ENCODE measurements at regions of chr15 and their contacts with region 1.

Region 1: GRCh38 chr15:67521029-67521811 is at the start of gene C15orf61:
- DNase-seq: peak; percentile 90
- ATAC-seq: peak; percentile 79
- H3K4me3 Mint-ChIP-seq: peak within 1 kb of the TSS; percentile 96
- H3K27ac Mint-ChIP-seq: peak within 1 kb of the TSS; percentile 98
- H3K4me1 Mint-ChIP-seq: peaks cover 21% of the 10 kb centered on the region
- H3K27me3 Mint-ChIP-seq: no peaks in the 10 kb centered on the region
- total RNA-seq, gene C15orf61: 3.4 to 5.0 TPM

Region 2: GRCh38 chr15:67254238-67255175 is 266.7 kb before region 1 on chr15 and contains the starts of genes AAGAB and IQCH:
- CTCF ChIA-PET with region 1: no interaction called
- POLR2A ChIA-PET with region 1: no interaction called
- intact Hi-C with region 1: loop called in 1 of 2 experiments (anchors 1 kb)
- DNase-seq: peak; percentile 98
- ATAC-seq: peak; percentile 93
- H3K4me3 Mint-ChIP-seq: peak within 1 kb of the TSS; percentile 100
- H3K27ac Mint-ChIP-seq: peak within 1 kb of the TSS; percentile 99
- H3K4me1 Mint-ChIP-seq: peaks cover 37% of the 10 kb centered on the region
- H3K27me3 Mint-ChIP-seq: no peaks in the 10 kb centered on the region
- total RNA-seq, gene AAGAB: 43.9 to 48.6 TPM
- total RNA-seq, gene IQCH: 1.8 to 2.1 TPM

Region 3: GRCh38 chr15:67456677-67457529 is 64.3 kb before region 1 on chr15:
- CTCF ChIA-PET with region 1: no interaction called
- POLR2A ChIA-PET with region 1: no interaction called
- intact Hi-C with region 1: no loop called
- DNase-seq: peak; percentile 92
- ATAC-seq: peak; percentile 86
- H3K4me3 Mint-ChIP-seq: no peak overlapping the region
- H3K27ac Mint-ChIP-seq: no peak overlapping the region
- H3K4me1 Mint-ChIP-seq: no peaks in the 10 kb centered on the region
- H3K27me3 Mint-ChIP-seq: peaks cover 2% of the 10 kb centered on the region

Region 4: DNA sequence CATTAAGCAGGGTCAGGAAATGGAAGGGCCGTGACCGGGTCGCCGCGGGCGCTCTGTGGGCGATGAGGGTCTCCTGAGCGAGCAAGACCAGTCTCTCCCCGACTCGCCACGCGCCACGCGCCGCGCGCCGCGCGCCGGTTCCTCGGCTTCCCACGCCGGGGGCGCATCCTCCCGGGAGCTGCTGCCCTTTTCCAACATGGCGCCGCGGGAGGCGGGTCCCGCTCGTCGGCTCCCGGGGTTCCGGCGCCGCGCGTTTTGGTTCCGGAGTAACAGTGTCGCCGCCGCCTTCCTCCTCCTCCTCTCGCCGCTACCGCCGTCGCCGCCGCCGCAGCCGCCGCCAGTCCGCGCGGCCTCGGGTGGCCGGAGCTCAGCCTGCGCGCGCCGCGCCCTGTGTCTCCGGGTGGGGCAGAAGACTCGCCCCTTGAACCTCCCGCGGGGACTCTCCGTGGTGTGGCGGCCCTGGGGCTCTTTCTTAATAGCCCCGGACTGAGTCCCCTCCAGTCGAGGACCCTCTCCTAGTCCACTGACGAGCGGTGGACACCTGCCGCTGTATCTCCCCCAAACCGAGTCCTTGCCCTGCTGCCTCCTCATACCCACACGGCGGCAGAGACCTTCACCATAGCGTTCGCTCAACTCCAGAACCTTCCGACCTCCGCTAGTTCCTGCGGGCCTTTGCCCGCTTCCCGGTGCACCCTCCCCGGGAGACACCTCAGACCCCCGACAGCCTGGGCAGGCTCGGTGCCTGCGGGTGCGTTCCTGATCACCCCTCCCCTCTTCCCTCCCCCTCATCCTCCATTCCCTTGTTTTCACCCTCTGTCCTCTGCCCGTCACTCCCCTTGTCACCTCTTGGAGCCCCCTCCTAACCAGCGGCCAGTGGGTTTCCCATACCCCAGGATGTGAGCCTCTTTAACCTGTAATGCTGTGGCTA is 21.5 kb after region 1 on chr15 and contains the start of gene MAP2K5:
- CTCF ChIA-PET with region 1: no interaction called
- POLR2A ChIA-PET with region 1: no interaction called
- intact Hi-C with region 1: loop called (anchors 1 to 2 kb)
- DNase-seq: peak; percentile 90
- ATAC-seq: peak; percentile 70
- H3K4me3 Mint-ChIP-seq: peak within 1 kb of the TSS; percentile 82
- H3K27ac Mint-ChIP-seq: peak within 1 kb of the TSS; percentile 95
- H3K4me1 Mint-ChIP-seq: peaks cover 43% of the 10 kb centered on the region
- H3K27me3 Mint-ChIP-seq: no peaks in the 10 kb centered on the region
- total RNA-seq, gene MAP2K5: 18.0 to 26.7 TPM

Region 5: GRCh38 chr15:67607959-67608715 is 86.9 kb after region 1 on chr15:
- CTCF ChIA-PET with region 1: no interaction called
- POLR2A ChIA-PET with region 1: no interaction called
- intact Hi-C with region 1: no loop called
- DNase-seq: no peak
- ATAC-seq: no peak
- H3K4me3 Mint-ChIP-seq: no peak overlapping the region
- H3K27ac Mint-ChIP-seq: no peak overlapping the region
- H3K4me1 Mint-ChIP-seq: no peaks in the 10 kb centered on the region
- H3K27me3 Mint-ChIP-seq: no peaks in the 10 kb centered on the region

Region 6: GRCh38 chr15:68229386-68230156 is 708.4 kb after region 1 on chr15 and contains the start of gene CLN6:
- CTCF ChIA-PET with region 1: no interaction called
- POLR2A ChIA-PET with region 1: interaction called, 10 read pairs
- intact Hi-C with region 1: loop called in 1 of 2 experiments (anchors 1 kb)
- DNase-seq: peak; percentile 88
- ATAC-seq: peak; percentile 88
- H3K4me3 Mint-ChIP-seq: peak within 1 kb of the TSS; percentile 99
- H3K27ac Mint-ChIP-seq: peak within 1 kb of the TSS; percentile 95
- H3K4me1 Mint-ChIP-seq: peaks cover 47% of the 10 kb centered on the region
- H3K27me3 Mint-ChIP-seq: no peaks in the 10 kb centered on the region
- total RNA-seq, gene CLN6: 45.1 to 48.2 TPM